ENCODE measurements at regions of chr2 and their contacts with region 1.

Region 1: DNA sequence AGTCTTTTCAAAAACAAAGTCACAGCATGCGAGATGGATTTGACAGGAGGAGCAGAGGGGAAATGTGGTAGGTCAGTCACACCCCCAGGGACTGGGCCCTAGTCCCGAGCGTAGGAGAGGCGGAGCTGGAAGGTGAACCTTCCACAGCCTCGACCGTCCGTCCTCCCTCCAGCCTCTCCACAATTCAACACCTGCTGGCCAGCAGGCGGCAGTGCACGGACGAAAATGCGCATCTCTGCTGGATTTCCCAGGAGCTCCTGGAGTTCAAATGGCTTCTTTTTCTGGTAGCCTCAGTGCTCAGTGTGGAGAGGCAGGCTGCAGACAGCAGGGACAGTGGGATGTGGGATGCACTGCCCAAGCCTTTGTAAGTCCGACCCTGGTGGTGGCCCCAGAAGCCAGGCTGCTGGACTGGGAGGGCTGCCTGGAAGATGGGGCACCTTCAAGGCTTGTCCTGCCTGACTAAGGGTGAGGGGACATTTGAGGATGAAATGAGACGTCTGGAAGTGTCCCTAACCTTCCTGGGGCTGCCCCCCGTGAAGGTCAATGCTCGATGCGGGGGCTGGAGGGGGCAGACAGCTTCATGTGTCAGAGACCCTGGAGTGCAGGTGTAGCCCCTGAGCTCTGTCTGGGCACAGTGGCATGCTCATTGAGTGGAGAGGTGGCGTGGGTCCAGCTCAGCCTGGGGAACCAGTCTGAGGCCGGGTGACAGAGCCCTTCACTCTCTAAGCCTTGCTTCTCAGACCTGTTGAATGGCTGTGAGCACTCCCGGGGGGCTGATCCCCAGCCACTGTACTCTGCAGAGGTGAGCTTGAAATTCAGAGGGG is 189.5 kb downstream of the TFCP2L1 start:
- DNase-seq: peak; percentile 87

Region 2: GRCh38 chr2:121333834-121334558 is 238.5 kb after region 1 on chr2:
- intact Hi-C with region 1: loop called (anchors 10 kb)
- DNase-seq: no peak

Region 3: DNA sequence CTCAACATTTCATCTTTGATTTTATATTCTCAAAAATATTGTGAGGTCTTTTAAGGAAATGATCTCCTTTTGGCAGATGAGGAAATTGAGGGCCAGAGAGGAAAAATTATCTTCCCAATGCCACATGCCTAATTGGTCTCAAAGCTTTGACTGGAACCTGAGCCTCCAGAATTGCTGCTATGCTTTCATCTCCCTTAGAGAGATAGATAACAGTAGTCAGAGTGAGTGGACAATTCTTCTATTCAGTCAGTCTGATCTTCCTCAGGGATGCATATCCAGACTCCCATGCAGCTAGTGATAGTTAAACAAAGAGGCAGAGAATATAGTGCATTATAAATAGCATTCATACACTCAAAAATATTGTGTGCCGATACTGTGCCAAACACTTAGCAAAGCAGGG is 557.6 kb after region 1 on chr2:
- intact Hi-C with region 1: no loop called
- DNase-seq: no peak

Measured in posterior vena cava (tissue), 2 donors.